ENCODE measurements at regions of chr1 and their contacts with region 1.

Region 1: GRCh38 chr1:63674238-63674864 is 81.1 kb downstream of the PGM1 start:
- DNase-seq: peak; percentile 26
- H3K4me3 ChIP-seq: no peak overlapping the region
- H3K27ac ChIP-seq: peak overlapping the region in 1 of 2 donors; percentile 53
- H3K4me1 ChIP-seq: no peaks in the 10 kb centered on the region
- H3K27me3 ChIP-seq: no peaks in the 10 kb centered on the region
- CTCF ChIP-seq: peak; percentile 11 to 59 (median 45)
- POLR2A ChIP-seq: no peak

Region 2: DNA sequence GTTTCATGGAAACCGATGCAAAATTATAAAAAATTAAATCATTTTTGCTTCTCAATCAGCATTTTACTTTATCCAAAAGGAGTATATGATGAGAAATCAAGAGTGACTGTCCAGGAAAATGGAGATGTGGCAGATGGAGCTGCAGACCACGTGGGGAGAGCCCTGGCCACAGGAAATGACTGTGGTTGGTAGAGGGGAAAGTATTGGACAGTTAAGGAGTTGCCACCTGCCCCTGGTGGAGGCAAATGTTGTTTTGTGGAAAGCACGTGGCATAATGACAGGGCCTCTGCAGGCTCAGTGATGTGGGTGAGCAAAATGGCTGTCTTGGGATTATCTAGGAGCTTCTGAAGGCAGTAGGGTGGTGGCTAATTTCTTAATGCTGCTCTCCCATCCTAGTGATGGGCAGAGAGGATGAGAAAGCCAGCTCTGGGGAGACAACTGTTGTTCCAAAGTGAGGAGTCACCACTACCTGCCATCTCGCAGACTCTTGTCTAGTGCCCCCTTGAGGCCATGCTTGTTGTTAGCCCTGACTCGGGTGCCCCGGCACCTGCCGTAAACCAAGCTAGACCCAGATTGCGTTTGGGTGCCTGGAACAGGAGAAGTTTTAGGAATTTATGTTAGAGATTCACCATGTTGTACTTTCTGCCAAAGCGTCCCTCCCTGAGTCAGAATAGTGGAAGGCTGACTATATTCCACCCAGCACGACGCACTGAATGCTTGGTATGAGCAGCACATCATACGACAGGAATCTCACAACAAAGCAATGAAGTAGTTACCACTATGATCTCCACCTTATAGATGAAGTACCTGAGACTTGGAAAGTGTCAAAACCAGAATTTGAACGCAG is 243.4 kb after region 1 on chr1:
- intact Hi-C with region 1: loop called (anchors 5 kb)
- DNase-seq: no peak
- H3K4me3 ChIP-seq: no peak overlapping the region
- H3K27ac ChIP-seq: no peak overlapping the region
- H3K4me1 ChIP-seq: peaks cover 3% of the 10 kb centered on the region
- H3K27me3 ChIP-seq: no peaks in the 10 kb centered on the region
- CTCF ChIP-seq: peak in 1 of 4 experiments; percentile 6
- POLR2A ChIP-seq: no peak

Region 3: GRCh38 chr1:64650411-64650810 is 976.1 kb after region 1 on chr1:
- intact Hi-C with region 1: no loop called
- DNase-seq: no peak
- H3K4me3 ChIP-seq: no peak overlapping the region
- H3K27ac ChIP-seq: no peak overlapping the region
- H3K4me1 ChIP-seq: no peaks in the 10 kb centered on the region
- H3K27me3 ChIP-seq: no peaks in the 10 kb centered on the region
- CTCF ChIP-seq: no peak
- POLR2A ChIP-seq: no peak

Measured in prostate gland (tissue), 2 donors.